GM10248 (cell line): ENCODE measurements at regions of chr2 and their contacts with region 1.

Region 1: GRCh38 chr2:10091182-10091888 is 11.1 kb upstream of the CYS1 start:
- DNase-seq: no peak
- CTCF ChIP-seq: peak; percentile 14

Region 2: GRCh38 chr2:10103179-10103732 is 11.9 kb after region 1 on chr2:
- CTCF ChIA-PET with region 1: interaction called, 24 read pairs
- POLR2A ChIA-PET with region 1: no interaction called
- DNase-seq: no peak
- CTCF ChIP-seq: no peak